ENCODE measurements at regions of chr19 and their contacts with region 1.

Region 1: GRCh38 chr19:42325273-42325895 is at the start of gene MEGF8:
- DNase-seq: peak; percentile 99
- H3K4me3 ChIP-seq: peak within 1 kb of the TSS; percentile 70 to 97 (median 88)
- H3K27ac ChIP-seq: peak within 1 kb of the TSS; percentile 82 to 90 (median 86)
- H3K4me1 ChIP-seq: peaks cover 13 to 47% (median 38%) of the 10 kb centered on the region in 6 donors
- H3K27me3 ChIP-seq: peaks cover 0 to 33% (median 21%) of the 10 kb centered on the region in 7 donors
- CTCF ChIP-seq: peak; percentile 89 to 97 (median 94)
- POLR2A ChIP-seq: peak in 2 of 3 donors; percentile 16 to 75
- total RNA-seq, gene MEGF8: 15.3 to 26.2 (median 22.5) TPM

Region 2: GRCh38 chr19:42396381-42397262 is 71.2 kb after region 1 on chr19:
- intact Hi-C with region 1: loop called (anchors 5 kb)
- DNase-seq: peak; percentile 98
- H3K4me3 ChIP-seq: peak overlapping the region; percentile 50 to 85 (median 55)
- H3K27ac ChIP-seq: peak overlapping the region; percentile 70 to 91 (median 85)
- H3K4me1 ChIP-seq: peaks cover 15 to 51% (median 33%) of the 10 kb centered on the region in 6 donors
- H3K27me3 ChIP-seq: peaks cover 0 to 3% (median 0%) of the 10 kb centered on the region in 7 donors
- CTCF ChIP-seq: peak in 2 of 11 experiments; percentile 19 to 22
- POLR2A ChIP-seq: peak; percentile 23 to 84 (median 63)